HepG2 (cell line): ENCODE measurements at regions of chr4 and their contacts with region 1.

Region 1: GRCh38 chr4:99088481-99089365 is at the start of gene ADH5:
- DNase-seq: peak; percentile 78
- ATAC-seq: peak; percentile 94
- H3K4me3 ChIP-seq: peak within 1 kb of the TSS; percentile 68 to 93 (median 89)
- H3K27ac ChIP-seq: peak within 1 kb of the TSS; percentile 85
- H3K4me1 ChIP-seq: peaks cover 47% of the 10 kb centered on the region
- H3K27me3 ChIP-seq: no peaks in the 10 kb centered on the region; a peak in 1 of 5 replicates
- CTCF ChIP-seq: no peak
- EP300 ChIP-seq: no peak
- POLR2A ChIP-seq: peak; percentile 93 to 97
- RAD21 ChIP-seq: 0 out of 2 replicates have a peak, but pooled peaks have one; percentile 8
- total RNA-seq, gene ADH5: 512 and 855 TPM in 2 replicates

Region 2: DNA sequence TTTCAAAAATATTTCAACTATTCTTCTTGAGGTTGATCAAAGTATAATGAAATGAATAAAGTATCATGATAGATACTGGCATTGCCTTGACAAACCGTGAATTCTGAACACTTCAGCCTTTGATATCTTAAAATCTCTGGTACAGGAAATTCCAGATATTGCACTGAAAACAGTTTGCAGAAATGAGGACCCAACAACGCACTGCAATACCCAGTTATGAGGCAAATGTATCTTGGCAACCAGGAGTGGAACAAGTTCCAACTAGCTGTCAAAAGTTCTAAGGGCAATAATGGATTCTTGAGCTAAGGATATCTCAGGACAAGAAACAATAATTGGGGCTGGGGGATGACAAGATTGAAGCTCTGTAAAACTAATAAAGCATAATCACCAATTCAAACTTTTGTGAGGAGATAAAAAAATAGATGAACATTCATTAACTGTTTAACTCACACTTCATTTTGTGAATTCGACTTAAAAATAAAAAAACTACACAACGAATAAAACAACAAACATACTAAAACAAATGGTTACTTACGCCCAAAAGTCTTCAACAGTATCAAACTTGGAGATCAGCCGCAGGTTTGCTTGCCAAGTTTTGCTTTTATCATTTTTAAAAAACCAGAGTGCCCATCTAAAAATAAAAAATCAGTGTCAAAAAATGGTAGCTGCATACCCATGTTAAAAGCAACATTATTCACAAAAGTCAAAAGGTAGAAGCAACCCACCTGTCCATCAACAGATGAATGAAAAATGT is 197.8 kb before region 1 on chr4:
- CTCF ChIA-PET with region 1: no interaction called
- POLR2A ChIA-PET with region 1: no interaction called
- in situ Hi-C with region 1: no loop called
- intact Hi-C with region 1: no loop called
- DNase-seq: no peak
- ATAC-seq: no peak
- H3K4me3 ChIP-seq: no peak overlapping the region
- H3K27ac ChIP-seq: no peak overlapping the region
- H3K4me1 ChIP-seq: no peaks in the 10 kb centered on the region
- H3K27me3 ChIP-seq: no peaks in the 10 kb centered on the region
- CTCF ChIP-seq: no peak
- EP300 ChIP-seq: no peak
- POLR2A ChIP-seq: no peak
- RAD21 ChIP-seq: no peak

Region 3: GRCh38 chr4:98928505-98929340 is 160.0 kb before region 1 on chr4 and contains the start of gene EIF4E:
- CTCF ChIA-PET with region 1: no interaction called
- POLR2A ChIA-PET with region 1: interaction called, 14 read pairs
- in situ Hi-C with region 1: no loop called
- intact Hi-C with region 1: loop called (anchors 5 kb)
- DNase-seq: peak; percentile 98
- ATAC-seq: peak; percentile 78
- H3K4me3 ChIP-seq: peak within 1 kb of the TSS; percentile 82 to 99 (median 93)
- H3K27ac ChIP-seq: peak within 1 kb of the TSS; percentile 95
- H3K4me1 ChIP-seq: peaks cover 30% of the 10 kb centered on the region
- H3K27me3 ChIP-seq: no peaks in the 10 kb centered on the region; a peak in 1 of 5 replicates
- CTCF ChIP-seq: peak; percentile 42
- EP300 ChIP-seq: 0 out of 4 replicates have a peak, but pooled peaks of 1 of the 2 experiments have one; percentile 39
- POLR2A ChIP-seq: peak; percentile 49 to 67; a peak in 3 of 4 replicates
- RAD21 ChIP-seq: no peak; the same call in 1 of the 2 replicates
- total RNA-seq, gene EIF4E: 194 and 288 TPM in 2 replicates

Region 4: GRCh38 chr4:99117876-99118693 is 29.4 kb after region 1 on chr4:
- CTCF ChIA-PET with region 1: no interaction called
- POLR2A ChIA-PET with region 1: interaction called, 10 read pairs
- in situ Hi-C with region 1: no loop called
- intact Hi-C with region 1: no loop called
- DNase-seq: peak; percentile 7
- ATAC-seq: peak; percentile 42; the same call in 2 of the 3 replicates
- H3K4me3 ChIP-seq: no peak overlapping the region
- H3K27ac ChIP-seq: peak overlapping the region; percentile 43
- H3K4me1 ChIP-seq: peaks cover 19% of the 10 kb centered on the region
- H3K27me3 ChIP-seq: no peaks in the 10 kb centered on the region
- CTCF ChIP-seq: peak; percentile 14; the same call in 1 of the 2 replicates
- EP300 ChIP-seq: no peak
- POLR2A ChIP-seq: no peak
- RAD21 ChIP-seq: no peak

Region 5: DNA sequence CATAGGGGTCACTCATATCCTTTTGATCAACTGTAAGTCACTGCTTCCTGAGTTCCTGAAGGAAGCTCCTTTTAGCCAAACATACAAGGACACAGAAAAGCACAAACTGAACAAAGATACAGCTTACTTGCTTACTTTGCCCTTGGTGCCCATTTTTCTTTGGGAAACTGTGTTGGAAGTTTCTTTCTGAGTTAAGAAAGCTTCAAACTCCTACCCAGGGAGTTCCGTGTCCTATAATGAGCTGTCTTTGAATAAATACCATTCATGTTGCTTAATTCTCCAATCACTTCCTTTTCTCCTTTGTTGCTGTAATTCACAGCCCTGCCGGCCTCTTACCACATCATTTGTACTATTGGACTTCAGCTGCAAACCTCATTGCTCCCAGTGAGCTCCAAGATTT is 55.3 kb after region 1 on chr4 and contains the start of gene ADH4:
- CTCF ChIA-PET with region 1: no interaction called
- POLR2A ChIA-PET with region 1: interaction called, 22 read pairs
- in situ Hi-C with region 1: no loop called
- intact Hi-C with region 1: loop called (anchors 5 kb)
- DNase-seq: peak; percentile 83
- ATAC-seq: peak; percentile 93
- H3K4me3 ChIP-seq: peak within 1 kb of the TSS; percentile 45 to 64 (median 54); a peak in 5 of 6 replicates
- H3K27ac ChIP-seq: peak within 1 kb of the TSS; percentile 96
- H3K4me1 ChIP-seq: peaks cover 59% of the 10 kb centered on the region
- H3K27me3 ChIP-seq: no peaks in the 10 kb centered on the region
- CTCF ChIP-seq: no peak
- EP300 ChIP-seq: peak; percentile 40 to 84; a peak in 2 of 4 replicates
- POLR2A ChIP-seq: peak; percentile 51 to 71; a peak in 3 of 4 replicates
- RAD21 ChIP-seq: no peak
- total RNA-seq, gene ADH4: 31.1 and 50.3 TPM in 2 replicates

Region 6: DNA sequence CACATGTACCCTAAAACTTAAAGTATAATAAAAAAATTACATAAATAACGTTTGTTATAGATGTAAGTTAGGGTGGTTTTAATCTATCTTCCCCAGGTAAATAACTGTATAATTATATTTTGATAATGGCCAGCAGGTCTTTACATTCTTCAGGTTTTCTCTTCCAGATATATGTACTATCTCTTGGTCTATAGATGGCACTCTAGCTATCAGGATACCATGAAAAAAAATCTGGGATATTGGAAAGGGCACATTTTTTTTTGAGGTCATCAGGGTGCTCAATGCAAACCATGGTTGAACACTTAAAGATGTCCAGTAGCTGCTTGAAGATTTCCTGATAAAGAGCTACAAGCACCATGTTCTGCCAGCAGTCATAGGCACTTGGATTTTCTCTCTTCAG is 71.0 kb after region 1 on chr4:
- CTCF ChIA-PET with region 1: no interaction called
- POLR2A ChIA-PET with region 1: interaction called, 16 read pairs
- in situ Hi-C with region 1: no loop called
- intact Hi-C with region 1: loop called (anchors 1 kb)
- DNase-seq: peak; percentile 20
- ATAC-seq: no peak
- H3K4me3 ChIP-seq: no peak overlapping the region
- H3K27ac ChIP-seq: no peak overlapping the region
- H3K4me1 ChIP-seq: peaks cover 70% of the 10 kb centered on the region
- H3K27me3 ChIP-seq: no peaks in the 10 kb centered on the region
- CTCF ChIP-seq: peak; percentile 56
- EP300 ChIP-seq: no peak
- POLR2A ChIP-seq: no peak
- RAD21 ChIP-seq: peak; percentile 46; the same call in 1 of the 2 replicates

Region 7: GRCh38 chr4:99219479-99219878 is 130.8 kb after region 1 on chr4:
- CTCF ChIA-PET with region 1: no interaction called
- POLR2A ChIA-PET with region 1: interaction called, 17 read pairs
- in situ Hi-C with region 1: no loop called
- intact Hi-C with region 1: loop called (anchors 10 kb)
- DNase-seq: peak; percentile 23
- ATAC-seq: peak; percentile 55
- H3K4me3 ChIP-seq: peak overlapping the region; percentile 26 to 81 (median 71); a peak in 5 of 6 replicates
- H3K27ac ChIP-seq: peak overlapping the region; percentile 69
- H3K4me1 ChIP-seq: peaks cover 41% of the 10 kb centered on the region
- H3K27me3 ChIP-seq: no peaks in the 10 kb centered on the region; a peak in 1 of 5 replicates
- CTCF ChIP-seq: no peak
- EP300 ChIP-seq: no peak
- POLR2A ChIP-seq: no peak
- RAD21 ChIP-seq: no peak

Region 8: GRCh38 chr4:99462875-99463464 is 374.2 kb after region 1 on chr4:
- CTCF ChIA-PET with region 1: no interaction called
- POLR2A ChIA-PET with region 1: no interaction called
- in situ Hi-C with region 1: no loop called
- intact Hi-C with region 1: loop called (anchors 10 kb)
- DNase-seq: peak; percentile 66
- ATAC-seq: peak; percentile 96
- H3K4me3 ChIP-seq: no peak overlapping the region
- H3K27ac ChIP-seq: no peak overlapping the region
- H3K4me1 ChIP-seq: peaks cover 9% of the 10 kb centered on the region
- H3K27me3 ChIP-seq: no peaks in the 10 kb centered on the region; a peak in 1 of 5 replicates
- CTCF ChIP-seq: peak; percentile 88
- EP300 ChIP-seq: no peak
- POLR2A ChIP-seq: no peak
- RAD21 ChIP-seq: peak; percentile 86